Sigmoid colon (tissue), 7 donors: ENCODE measurements at regions of chr2 and their contacts with region 1.

Region 1: GRCh38 chr2:130355578-130356431 is at the start of gene PTPN18:
- DNase-seq: peak; percentile 94
- H3K4me3 ChIP-seq: peak within 1 kb of the TSS; percentile 64 to 86 (median 78)
- H3K27ac ChIP-seq: peak within 1 kb of the TSS; percentile 79 to 85 (median 83)
- H3K4me1 ChIP-seq: peaks cover 0 to 25% (median 19%) of the 10 kb centered on the region in 4 donors
- H3K27me3 ChIP-seq: no peaks in the 10 kb centered on the region
- CTCF ChIP-seq: peak in 2 of 4 experiments; percentile 28 to 53
- EP300 ChIP-seq: no peak
- POLR2A ChIP-seq: peak; percentile 19 to 29
- total RNA-seq, gene PTPN18: 30.0 to 39.2 (median 37.4) TPM

Region 2: DNA sequence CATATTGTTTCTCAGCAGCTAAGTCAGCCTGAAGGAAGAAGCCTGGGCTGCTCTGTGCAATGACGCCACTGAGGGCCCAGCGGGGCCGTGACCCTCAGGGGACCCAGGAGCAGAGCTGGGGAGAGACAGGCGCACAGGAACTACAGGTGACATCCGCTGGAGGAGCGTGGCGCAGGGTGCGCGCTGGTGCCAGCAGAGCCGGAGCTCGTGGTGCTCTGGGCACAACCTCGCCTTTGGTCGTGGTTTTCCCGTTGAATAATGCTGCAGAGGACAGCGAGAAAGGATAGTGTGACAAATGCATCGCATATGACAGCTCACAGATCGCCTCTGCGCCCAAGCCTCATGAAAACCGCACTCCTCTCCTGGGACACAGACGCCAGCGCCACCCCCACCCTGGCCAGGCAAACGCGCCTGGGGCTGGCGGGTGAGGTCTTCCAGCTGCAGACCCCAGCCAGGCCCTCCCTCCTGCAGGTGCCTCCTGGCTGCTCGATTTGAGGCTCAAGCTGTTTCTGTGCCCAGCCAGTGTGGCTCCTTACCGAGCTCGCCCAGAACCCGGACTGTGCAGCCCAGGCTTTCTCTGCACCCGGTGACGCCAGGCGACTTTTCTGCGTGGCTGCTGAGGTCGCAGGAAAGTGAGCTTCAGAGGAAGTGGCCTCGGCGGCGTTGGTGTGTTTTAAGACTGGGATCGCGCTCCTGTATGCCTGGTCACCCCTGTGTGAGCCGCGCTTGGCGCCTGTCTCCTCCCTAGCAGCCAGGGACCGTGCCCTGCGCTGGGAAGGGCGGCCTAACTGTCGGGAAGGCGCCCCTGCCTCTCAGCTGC is 1454.0 kb before region 1 on chr2:
- intact Hi-C with region 1: no loop called
- DNase-seq: no peak
- H3K4me3 ChIP-seq: no peak overlapping the region
- H3K27ac ChIP-seq: no peak overlapping the region
- H3K4me1 ChIP-seq: no peaks in the 10 kb centered on the region
- H3K27me3 ChIP-seq: no peaks in the 10 kb centered on the region
- CTCF ChIP-seq: no peak
- EP300 ChIP-seq: no peak
- POLR2A ChIP-seq: no peak

Region 3: DNA sequence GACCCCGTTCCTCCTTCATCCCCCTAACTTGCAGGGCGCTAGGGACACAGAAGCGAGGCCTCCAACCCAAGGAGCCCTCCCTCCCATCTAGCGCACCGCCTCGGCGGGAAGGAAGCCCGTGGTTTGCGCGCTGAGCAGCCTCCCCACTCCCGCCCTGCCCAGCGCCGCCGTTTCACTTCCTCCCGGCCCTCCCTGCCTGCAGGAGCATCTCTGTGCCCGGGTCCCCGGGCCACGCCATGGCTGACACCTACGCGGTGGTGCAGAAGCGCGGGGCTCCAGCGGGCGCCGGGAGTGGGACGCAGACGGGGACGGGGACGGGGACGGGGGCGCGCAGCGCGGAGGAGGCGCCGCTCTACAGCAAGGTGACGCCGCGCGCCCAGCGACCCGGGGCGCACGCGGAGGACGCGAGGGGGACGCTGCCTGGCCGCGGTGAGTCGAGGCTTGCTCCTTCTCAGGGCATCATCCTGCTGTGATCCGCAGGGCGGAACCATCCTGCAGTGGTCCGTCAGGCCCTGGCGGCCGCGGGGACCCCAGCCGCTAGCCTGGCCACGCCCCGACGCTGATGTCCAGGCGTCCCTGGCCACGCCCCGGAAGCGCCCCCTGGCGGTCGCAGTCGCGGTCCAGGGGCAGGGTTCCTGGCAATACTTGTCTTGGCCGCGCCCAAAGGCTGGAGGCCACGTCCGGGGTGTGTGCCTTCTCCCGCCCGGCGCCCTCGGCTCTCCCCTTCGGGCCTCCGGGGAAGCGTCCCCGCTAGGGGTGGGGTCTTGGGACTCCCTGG is 16.4 kb after region 1 on chr2:
- intact Hi-C with region 1: loop called (anchors 1 kb)
- DNase-seq: peak; percentile 93
- H3K4me3 ChIP-seq: peak overlapping the region; percentile 59 to 97 (median 79)
- H3K27ac ChIP-seq: peak overlapping the region; percentile 82 to 95 (median 88)
- H3K4me1 ChIP-seq: peaks cover 0 to 33% (median 27%) of the 10 kb centered on the region in 4 donors
- H3K27me3 ChIP-seq: no peaks in the 10 kb centered on the region
- CTCF ChIP-seq: peak; percentile 92 to 94 (median 94)
- EP300 ChIP-seq: peak in 1 of 4 donors; percentile 13
- POLR2A ChIP-seq: peak; percentile 13 to 42

Region 4: GRCh38 chr2:130391058-130391871 is 35.5 kb after region 1 on chr2:
- intact Hi-C with region 1: loop called (anchors 5 kb)
- DNase-seq: peak; percentile 85
- H3K4me3 ChIP-seq: peak overlapping the region; percentile 61 to 74 (median 66)
- H3K27ac ChIP-seq: peak overlapping the region; percentile 80 to 89 (median 83)
- H3K4me1 ChIP-seq: peaks cover 0 to 20% (median 17%) of the 10 kb centered on the region in 4 donors
- H3K27me3 ChIP-seq: peaks cover 0 to 2% (median 0%) of the 10 kb centered on the region in 3 donors
- CTCF ChIP-seq: no peak
- EP300 ChIP-seq: no peak
- POLR2A ChIP-seq: peak; percentile 8 to 27

Region 5: DNA sequence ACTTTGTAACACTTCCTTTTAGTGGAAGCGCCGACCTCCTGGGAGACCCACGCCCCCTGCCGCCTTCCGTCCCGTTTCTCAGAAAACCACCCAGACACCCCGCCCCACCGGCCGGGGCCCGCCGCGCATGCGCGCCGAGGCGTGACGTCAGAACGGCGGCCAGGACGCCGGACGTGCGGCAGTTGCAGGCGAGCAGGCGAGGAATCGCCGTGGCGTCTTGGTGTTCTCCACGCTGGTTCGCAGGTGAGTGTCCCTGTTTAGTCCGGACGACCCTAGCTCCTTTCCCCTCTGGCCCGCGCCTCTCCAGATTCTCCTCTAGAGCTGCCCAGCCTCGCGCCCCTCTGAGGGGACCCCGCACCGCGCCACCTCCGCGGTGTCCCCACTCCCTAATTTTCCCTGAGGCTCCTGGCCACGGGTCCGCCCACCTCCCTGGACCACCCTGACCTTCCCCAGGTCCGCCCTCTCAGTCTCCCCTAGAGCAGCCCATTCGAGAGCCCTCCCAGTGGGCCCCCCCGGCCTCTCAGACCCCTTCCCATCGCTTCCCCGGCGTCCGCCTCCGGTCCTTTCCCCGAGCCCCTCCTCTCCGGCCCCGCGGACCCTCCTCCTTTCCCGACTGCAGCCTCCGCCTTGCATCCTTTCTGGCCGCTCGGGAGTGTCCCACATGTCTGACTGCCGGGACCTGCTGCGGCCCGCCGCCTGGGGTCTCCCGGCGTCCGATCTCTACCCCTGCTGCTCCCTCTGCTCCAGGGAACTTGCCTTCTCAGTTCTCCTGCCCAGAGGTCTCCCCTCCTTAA is 749.5 kb after region 1 on chr2 and contains the start of gene PLEKHB2:
- intact Hi-C with region 1: loop called (anchors 10 kb)
- DNase-seq: peak; percentile 94
- H3K4me3 ChIP-seq: peak within 1 kb of the TSS; percentile 75 to 98 (median 87)
- H3K27ac ChIP-seq: peak within 1 kb of the TSS; percentile 85 to 94 (median 90)
- H3K4me1 ChIP-seq: peaks cover 0 to 31% (median 23%) of the 10 kb centered on the region in 4 donors
- H3K27me3 ChIP-seq: no peaks in the 10 kb centered on the region
- CTCF ChIP-seq: no peak
- EP300 ChIP-seq: no peak
- POLR2A ChIP-seq: peak; percentile 79 to 93
- total RNA-seq, gene PLEKHB2: 28.8 to 39.6 (median 33.7) TPM